PC-3 (cell line): ENCODE measurements at regions of chr1 and their contacts with region 1.

Region 1: GRCh38 chr1:229440851-229441537 is 7.1 kb upstream of the ACTA1 start:
- DNase-seq: peak; percentile 78
- ATAC-seq: peak; percentile 90
- H3K4me3 ChIP-seq: no peak overlapping the region
- H3K27ac ChIP-seq: peak overlapping the region; percentile 52
- H3K4me1 ChIP-seq: peaks cover 19% of the 10 kb centered on the region
- H3K27me3 ChIP-seq: no peaks in the 10 kb centered on the region
- CTCF ChIP-seq: no peak

Region 2: DNA sequence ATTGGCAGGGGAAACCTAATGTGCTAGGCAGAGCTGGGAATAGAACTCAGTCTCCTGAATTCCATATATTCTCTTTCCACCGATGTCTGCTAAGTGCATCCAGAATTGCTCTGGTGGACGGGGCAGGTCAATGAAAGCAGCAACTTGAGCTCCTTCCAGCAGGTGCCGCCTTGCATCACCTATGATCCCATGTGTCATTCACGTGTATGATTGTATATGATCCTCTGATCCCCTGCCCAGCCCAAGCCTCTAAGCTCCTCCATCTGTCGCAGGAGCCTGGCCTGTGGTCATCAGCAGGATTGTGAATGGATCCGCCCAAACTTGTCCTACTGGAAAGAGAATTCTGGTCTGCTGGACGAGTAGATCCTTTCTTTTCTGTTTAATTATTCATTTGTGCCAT is 20.2 kb before region 1 on chr1:
- CTCF ChIA-PET with region 1: interaction called, 22 read pairs
- POLR2A ChIA-PET with region 1: interaction called, 4 read pairs
- intact Hi-C with region 1: no loop called
- DNase-seq: peak; percentile 31
- ATAC-seq: peak; percentile 57
- H3K4me3 ChIP-seq: no peak overlapping the region
- H3K27ac ChIP-seq: no peak overlapping the region
- H3K4me1 ChIP-seq: no peaks in the 10 kb centered on the region
- H3K27me3 ChIP-seq: peaks cover 8% of the 10 kb centered on the region
- CTCF ChIP-seq: peak; percentile 34; the same call in 1 of the 2 replicates